Activated B cell treated with CpG ODN at 0.5 μM for 24 hours (primary cell): ENCODE measurements at regions of chrX and their contacts with region 1.

Region 1: GRCh38 chrX:49155900-49156837 is 6.4 kb upstream of the MAGIX start:
- DNase-seq: peak; percentile 78
- ATAC-seq: peak; percentile 91
- H3K4me3 Mint-ChIP-seq: peak overlapping the region; percentile 93
- H3K27ac Mint-ChIP-seq: peak overlapping the region; percentile 93
- H3K4me1 Mint-ChIP-seq: peaks cover 20% of the 10 kb centered on the region
- H3K27me3 Mint-ChIP-seq: no peaks in the 10 kb centered on the region
- CTCF ChIP-seq: no peak

Region 2: DNA sequence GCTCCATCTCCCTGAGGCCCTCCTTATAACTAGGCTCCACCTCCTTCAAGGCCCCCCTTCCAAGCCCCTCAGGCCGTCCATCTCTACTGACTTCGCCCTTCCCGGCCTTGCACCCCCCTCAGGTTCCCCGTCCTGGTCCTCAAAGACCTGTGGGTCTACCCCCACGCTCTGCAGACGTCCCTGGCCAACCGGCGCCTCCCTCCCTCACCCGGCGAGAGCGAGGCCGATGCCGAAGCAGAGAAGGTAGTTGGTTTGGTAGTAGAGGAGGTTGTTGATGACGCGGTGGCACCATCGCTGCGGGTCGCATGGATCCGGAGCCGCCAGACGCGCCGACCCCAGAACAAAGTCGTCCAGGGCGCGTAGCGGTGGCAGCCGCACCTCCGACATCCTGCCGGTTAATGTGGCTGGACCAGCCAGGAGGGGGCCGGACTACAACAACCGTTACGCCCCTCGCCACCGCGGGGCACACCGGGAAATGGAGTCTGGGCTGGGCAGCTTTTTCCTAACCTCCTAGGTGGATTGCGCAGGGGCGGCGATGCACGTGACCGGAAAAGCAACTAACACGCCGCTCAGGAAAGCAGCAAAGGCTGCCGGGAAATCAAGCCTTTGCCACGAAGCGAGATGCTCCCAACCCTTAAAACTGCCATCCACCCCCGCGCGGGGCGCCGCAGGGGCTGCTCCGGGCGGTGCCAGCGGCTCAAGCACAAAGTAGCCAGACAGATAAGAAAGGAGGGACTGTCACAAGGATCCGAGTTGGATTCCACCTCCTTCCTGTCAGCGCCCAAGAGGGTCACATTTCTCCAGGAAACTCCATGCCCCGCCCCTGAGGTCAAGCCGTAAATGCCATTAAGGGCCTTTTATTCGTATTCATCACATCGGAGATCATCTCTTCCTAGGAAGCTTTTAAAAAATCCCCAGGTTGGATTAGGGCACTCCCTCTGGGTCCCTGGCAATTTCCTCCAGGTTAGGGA is 82.3 kb before region 1 on chrX and contains the start of gene PRAF2:
- CTCF ChIA-PET with region 1: interaction called, 3 read pairs
- POLR2A ChIA-PET with region 1: interaction called, 10 read pairs
- intact Hi-C with region 1: no loop called
- DNase-seq: peak; percentile 76
- ATAC-seq: peak; percentile 99
- H3K4me3 Mint-ChIP-seq: peak within 1 kb of the TSS; percentile 84
- H3K27ac Mint-ChIP-seq: peak within 1 kb of the TSS; percentile 72
- H3K4me1 Mint-ChIP-seq: peaks cover 23% of the 10 kb centered on the region
- H3K27me3 Mint-ChIP-seq: no peaks in the 10 kb centered on the region
- CTCF ChIP-seq: no peak
- total RNA-seq, gene PRAF2: 10.6 and 11.6 TPM in 2 replicates

Region 3: GRCh38 chrX:49172280-49172780 is 16.2 kb after region 1 on chrX:
- CTCF ChIA-PET with region 1: no interaction called
- POLR2A ChIA-PET with region 1: interaction called, 32 read pairs
- intact Hi-C with region 1: loop called (anchors 1 kb)
- DNase-seq: peak; percentile 57
- ATAC-seq: peak; percentile 67
- H3K4me3 Mint-ChIP-seq: peak overlapping the region; percentile 89
- H3K27ac Mint-ChIP-seq: peak overlapping the region; percentile 84
- H3K4me1 Mint-ChIP-seq: peaks cover 37% of the 10 kb centered on the region
- H3K27me3 Mint-ChIP-seq: no peaks in the 10 kb centered on the region
- CTCF ChIP-seq: no peak

Region 4: GRCh38 chrX:49303346-49303745 is 147.2 kb after region 1 on chrX and contains the start of gene GAGE10:
- CTCF ChIA-PET with region 1: no interaction called
- POLR2A ChIA-PET with region 1: no interaction called
- intact Hi-C with region 1: no loop called
- DNase-seq: no peak
- ATAC-seq: no peak
- H3K4me3 Mint-ChIP-seq: no peak within 1 kb of the TSS
- H3K27ac Mint-ChIP-seq: no peak within 1 kb of the TSS
- H3K4me1 Mint-ChIP-seq: no peaks in the 10 kb centered on the region
- H3K27me3 Mint-ChIP-seq: no peaks in the 10 kb centered on the region
- CTCF ChIP-seq: no peak
- total RNA-seq, gene GAGE10: not detected in 2 replicates

Region 5: GRCh38 chrX:50629786-50630185 is 1473.6 kb after region 1 on chrX:
- CTCF ChIA-PET with region 1: no interaction called
- POLR2A ChIA-PET with region 1: no interaction called
- intact Hi-C with region 1: no loop called
- DNase-seq: no peak
- ATAC-seq: no peak
- H3K4me3 Mint-ChIP-seq: no peak overlapping the region
- H3K27ac Mint-ChIP-seq: no peak overlapping the region
- H3K4me1 Mint-ChIP-seq: no peaks in the 10 kb centered on the region
- H3K27me3 Mint-ChIP-seq: no peaks in the 10 kb centered on the region
- CTCF ChIP-seq: no peak